Activated naive CD8-positive, alpha-beta T cell treated with anti-CD3 and anti-CD28 coated beads, Interleukin-2, amount 10 ng/mL, durations not matched to agents 7 days and 5 days (primary cell): ENCODE measurements at regions of chr11 and their contacts with region 1.

Region 1: DNA sequence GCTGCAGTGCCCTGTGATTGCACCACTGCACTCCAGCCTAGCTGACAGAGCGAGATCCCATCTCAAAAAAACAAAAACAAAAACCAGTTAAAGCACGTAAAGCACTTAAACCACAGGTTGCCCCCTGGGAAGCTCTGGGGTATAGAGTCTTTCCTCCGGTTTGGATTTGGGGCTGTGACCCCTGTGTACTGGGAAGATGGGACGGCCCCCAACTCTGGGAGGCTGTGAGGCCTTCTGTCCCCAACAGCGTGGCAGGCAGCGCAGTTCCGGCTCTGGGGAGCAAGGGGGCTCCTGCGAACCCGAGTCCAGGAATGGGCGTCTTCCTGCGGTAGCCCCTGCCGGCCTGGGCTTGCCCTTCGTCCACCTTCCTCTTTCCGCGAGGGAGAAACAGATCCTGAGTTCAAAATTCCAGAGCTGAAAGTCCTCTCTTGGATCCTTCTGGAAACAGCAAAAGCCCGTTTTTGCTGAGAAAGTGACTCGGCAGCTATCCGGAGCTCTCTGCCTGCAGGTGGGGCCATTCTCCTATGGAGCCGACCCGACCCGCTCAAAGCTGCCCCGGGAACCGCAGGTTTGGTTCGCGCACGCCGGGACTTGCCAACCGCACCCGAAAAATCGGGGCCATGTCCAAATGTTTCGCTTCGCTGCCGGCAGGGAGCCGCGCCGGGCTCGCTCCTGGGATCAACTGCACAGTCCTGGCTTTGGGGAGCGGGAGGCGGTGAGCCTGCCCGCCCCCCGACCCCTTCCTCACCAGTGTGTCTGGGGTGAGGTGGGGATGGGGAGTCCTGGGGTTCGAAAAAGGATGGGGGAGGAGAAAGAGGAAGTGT is 36.3 kb upstream of the POLA2 start:
- DNase-seq: peak; percentile 65
- ATAC-seq: peak; percentile 82
- H3K4me3 Mint-ChIP-seq: peak overlapping the region; percentile 81
- H3K27ac Mint-ChIP-seq: peak overlapping the region; percentile 32
- H3K4me1 Mint-ChIP-seq: peaks cover 17% of the 10 kb centered on the region
- H3K27me3 Mint-ChIP-seq: peaks cover 16% of the 10 kb centered on the region

Region 2: DNA sequence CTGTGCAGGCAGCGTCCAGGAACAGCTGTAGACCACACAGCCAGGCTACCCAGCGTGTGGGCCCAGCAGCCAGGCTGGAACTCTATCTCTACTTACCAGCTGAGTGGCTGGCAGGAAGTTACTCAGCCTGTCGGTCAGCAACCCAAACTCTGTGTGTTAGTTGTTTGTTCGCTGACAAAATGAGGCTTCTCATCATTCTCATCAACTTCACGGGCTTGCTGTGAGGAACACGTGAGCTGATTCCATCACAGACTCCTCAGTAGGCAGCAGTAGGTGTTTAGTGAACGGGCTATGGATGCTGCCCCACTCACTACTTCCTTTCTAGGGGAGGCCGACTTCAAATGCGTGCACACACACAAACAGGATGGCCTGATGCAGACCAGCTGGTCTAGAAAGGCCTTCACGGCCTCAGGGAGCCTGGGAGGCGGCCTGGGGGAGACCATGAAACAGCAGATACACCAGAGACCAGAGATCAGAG is 56.3 kb before region 1 on chr11:
- POLR2A ChIA-PET with region 1: no interaction called
- DNase-seq: no peak
- ATAC-seq: peak; percentile 50
- H3K4me3 Mint-ChIP-seq: no peak overlapping the region
- H3K27ac Mint-ChIP-seq: peak overlapping the region; percentile 79
- H3K4me1 Mint-ChIP-seq: peaks cover 11% of the 10 kb centered on the region
- H3K27me3 Mint-ChIP-seq: peaks cover 3% of the 10 kb centered on the region

Region 3: DNA sequence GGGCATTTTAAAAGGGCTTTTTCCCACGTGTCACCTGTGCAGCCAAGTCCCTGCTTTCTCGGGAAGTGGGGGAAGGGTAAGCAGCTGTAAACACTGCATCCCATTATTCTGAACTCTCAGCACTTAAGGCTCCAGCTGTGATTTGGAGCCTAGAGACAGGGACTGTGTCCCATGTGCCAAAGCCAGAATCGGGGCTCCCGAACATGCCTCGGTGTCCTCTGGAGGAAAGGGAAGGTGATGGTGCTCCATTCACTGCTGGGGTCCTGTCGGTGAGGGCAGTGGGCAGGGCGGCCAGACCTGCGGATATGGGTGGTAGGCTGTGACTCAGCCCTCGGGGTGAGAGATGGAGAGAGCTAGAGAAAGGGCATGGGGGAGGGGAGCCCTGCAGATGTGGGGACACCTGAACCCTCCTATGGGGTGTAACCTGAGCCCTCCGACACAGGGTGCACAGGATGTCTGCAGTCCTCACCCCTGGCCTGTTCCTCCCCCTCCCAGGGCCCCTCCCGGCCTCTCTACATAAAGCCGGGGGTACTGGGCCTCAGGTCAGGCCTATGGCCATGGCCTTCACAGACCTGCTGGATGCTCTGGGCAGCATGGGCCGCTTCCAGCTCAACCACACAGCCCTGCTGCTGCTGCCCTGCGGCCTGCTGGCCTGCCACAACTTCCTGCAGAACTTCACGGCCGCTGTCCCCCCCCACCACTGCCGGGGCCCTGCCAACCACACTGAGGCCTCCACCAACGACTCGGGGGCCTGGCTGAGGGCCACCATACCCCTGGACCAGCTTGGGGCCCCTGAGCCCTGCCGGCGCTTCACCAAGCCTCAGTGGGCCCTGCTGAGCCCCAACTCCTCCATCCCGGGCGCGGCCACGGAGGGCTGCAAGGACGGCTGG is 11.9 kb before region 1 on chr11:
- POLR2A ChIA-PET with region 1: no interaction called
- DNase-seq: no peak
- ATAC-seq: peak; percentile 75
- H3K4me3 Mint-ChIP-seq: peak overlapping the region; percentile 28
- H3K27ac Mint-ChIP-seq: peak overlapping the region; percentile 48
- H3K4me1 Mint-ChIP-seq: peaks cover 20% of the 10 kb centered on the region
- H3K27me3 Mint-ChIP-seq: no peaks in the 10 kb centered on the region

Region 4: GRCh38 chr11:65236194-65237059 is 10.9 kb after region 1 on chr11:
- POLR2A ChIA-PET with region 1: no interaction called
- DNase-seq: no peak
- ATAC-seq: no peak
- H3K4me3 Mint-ChIP-seq: no peak overlapping the region
- H3K27ac Mint-ChIP-seq: no peak overlapping the region
- H3K4me1 Mint-ChIP-seq: no peaks in the 10 kb centered on the region
- H3K27me3 Mint-ChIP-seq: peaks cover 4% of the 10 kb centered on the region

Region 5: DNA sequence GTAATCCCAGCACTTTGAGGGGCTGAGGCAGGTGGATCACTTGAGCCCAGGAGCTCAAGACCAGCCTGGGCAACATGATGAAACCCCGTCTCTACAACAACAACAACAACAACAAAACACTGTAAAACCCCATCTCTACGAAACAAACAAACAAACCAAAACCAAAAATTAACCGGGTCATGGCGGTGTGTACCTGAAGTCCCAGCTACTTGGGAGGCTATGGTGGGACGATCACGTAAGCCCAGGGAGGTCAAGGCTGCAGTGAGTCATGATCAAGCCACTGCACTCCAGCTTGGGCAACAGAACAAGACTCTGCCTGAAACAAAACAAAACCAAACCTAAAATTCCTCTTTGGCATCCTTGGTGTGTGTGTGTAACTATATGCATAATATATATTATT is 29.2 kb after region 1 on chr11:
- POLR2A ChIA-PET with region 1: no interaction called
- DNase-seq: no peak
- ATAC-seq: no peak
- H3K4me3 Mint-ChIP-seq: no peak overlapping the region
- H3K27ac Mint-ChIP-seq: no peak overlapping the region
- H3K4me1 Mint-ChIP-seq: peaks cover 9% of the 10 kb centered on the region
- H3K27me3 Mint-ChIP-seq: peaks cover 11% of the 10 kb centered on the region

Region 6: GRCh38 chr11:65314501-65315203 is 89.2 kb after region 1 on chr11 and contains the start of gene CDC42EP2:
- POLR2A ChIA-PET with region 1: interaction called, 10 read pairs
- DNase-seq: peak; percentile 85
- ATAC-seq: peak; percentile 89
- H3K4me3 Mint-ChIP-seq: peak within 1 kb of the TSS; percentile 74
- H3K27ac Mint-ChIP-seq: no peak within 1 kb of the TSS
- H3K4me1 Mint-ChIP-seq: peaks cover 6% of the 10 kb centered on the region
- H3K27me3 Mint-ChIP-seq: peaks cover 20% of the 10 kb centered on the region
- total RNA-seq, gene CDC42EP2: 0.51 to 1.7 TPM